Panc1 (cell line): ENCODE measurements at regions of chr17 and their contacts with region 1.

Region 1: DNA sequence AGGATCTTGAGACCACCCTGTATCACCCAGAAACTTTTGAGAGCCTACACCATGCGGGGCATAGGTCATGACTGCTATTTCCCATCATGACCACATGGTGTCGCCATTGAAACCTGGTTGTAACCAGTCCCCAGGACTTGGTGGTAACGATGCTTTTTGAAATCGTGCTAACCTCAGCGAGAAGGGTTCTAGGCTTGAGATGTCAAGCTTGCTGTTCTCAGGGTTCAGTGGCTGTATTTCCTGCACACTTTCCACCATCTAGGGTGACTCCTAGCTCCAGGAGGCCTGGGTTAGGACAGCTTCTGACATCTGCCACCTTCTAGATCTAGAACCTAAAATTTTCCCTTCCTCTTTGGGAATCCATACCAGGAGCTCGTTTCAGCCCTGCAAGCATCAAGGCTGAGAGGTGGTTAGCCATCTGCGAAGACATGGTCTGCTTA is 13.0 kb upstream of the SPNS3 start:
- DNase-seq: peak; percentile 77
- ATAC-seq: peak; percentile 92
- H3K4me3 ChIP-seq: no peak overlapping the region
- H3K27ac ChIP-seq: no peak overlapping the region
- H3K4me1 ChIP-seq: no peaks in the 10 kb centered on the region
- H3K27me3 ChIP-seq: no peaks in the 10 kb centered on the region
- CTCF ChIP-seq: peak; percentile 87

Region 2: GRCh38 chr17:4444782-4445473 is 24.2 kb after region 1 on chr17:
- CTCF ChIA-PET with region 1: no interaction called
- POLR2A ChIA-PET with region 1: no interaction called
- in situ Hi-C with region 1: no loop called
- intact Hi-C with region 1: no loop called
- DNase-seq: no peak
- ATAC-seq: peak; percentile 68
- H3K4me3 ChIP-seq: no peak overlapping the region
- H3K27ac ChIP-seq: no peak overlapping the region
- H3K4me1 ChIP-seq: peaks cover 2% of the 10 kb centered on the region
- H3K27me3 ChIP-seq: no peaks in the 10 kb centered on the region
- CTCF ChIP-seq: no peak

Region 3: GRCh38 chr17:4678427-4679026 is 257.8 kb after region 1 on chr17:
- CTCF ChIA-PET with region 1: no interaction called
- POLR2A ChIA-PET with region 1: interaction called, 11 read pairs
- in situ Hi-C with region 1: no loop called
- intact Hi-C with region 1: no loop called
- DNase-seq: peak; percentile 32
- ATAC-seq: peak; percentile 86
- H3K4me3 ChIP-seq: no peak overlapping the region
- H3K27ac ChIP-seq: no peak overlapping the region; the same call in 1 of the 2 replicates
- H3K4me1 ChIP-seq: peaks cover 8% of the 10 kb centered on the region; the same call in 1 of the 2 replicates
- H3K27me3 ChIP-seq: no peaks in the 10 kb centered on the region
- CTCF ChIP-seq: no peak